ENCODE measurements at regions of chr11 and their contacts with region 1.

Region 1: GRCh38 chr11:129323896-129324512 is 51.6 kb upstream of the BARX2 start:
- DNase-seq: peak in 5 of 7 donors; percentile 25 to 47 (median 34)
- H3K4me3 ChIP-seq: peak overlapping the region in 1 of 4 donors; percentile 6
- H3K27ac ChIP-seq: peak overlapping the region in 1 of 5 donors; percentile 53
- H3K4me1 ChIP-seq: peaks cover 0 to 4% of the 10 kb centered on the region in 2 donors
- H3K27me3 ChIP-seq: no peaks in the 10 kb centered on the region
- CTCF ChIP-seq: no peak
- POLR2A ChIP-seq: no peak

Region 2: GRCh38 chr11:128884703-128885338 is 439.2 kb before region 1 on chr11:
- intact Hi-C with region 1: loop called in 1 of 2 experiments (anchors 10 kb)
- DNase-seq: peak; percentile 58 to 86 (median 76)
- H3K4me3 ChIP-seq: no peak overlapping the region
- H3K27ac ChIP-seq: no peak overlapping the region
- H3K4me1 ChIP-seq: peaks cover 0 to under 1% of the 10 kb centered on the region in 2 donors
- H3K27me3 ChIP-seq: no peaks in the 10 kb centered on the region
- CTCF ChIP-seq: peak; percentile 81 to 94 (median 92)
- POLR2A ChIP-seq: no peak

Region 3: GRCh38 chr11:129223701-129224149 is 100.3 kb before region 1 on chr11:
- intact Hi-C with region 1: loop called in 1 of 2 experiments (anchors 10 kb)
- DNase-seq: no peak
- H3K4me3 ChIP-seq: no peak overlapping the region
- H3K27ac ChIP-seq: peak overlapping the region in 1 of 5 donors; percentile 8
- H3K4me1 ChIP-seq: peaks cover 15 to 24% of the 10 kb centered on the region in 2 donors
- H3K27me3 ChIP-seq: no peaks in the 10 kb centered on the region
- CTCF ChIP-seq: no peak
- POLR2A ChIP-seq: no peak

Region 4: DNA sequence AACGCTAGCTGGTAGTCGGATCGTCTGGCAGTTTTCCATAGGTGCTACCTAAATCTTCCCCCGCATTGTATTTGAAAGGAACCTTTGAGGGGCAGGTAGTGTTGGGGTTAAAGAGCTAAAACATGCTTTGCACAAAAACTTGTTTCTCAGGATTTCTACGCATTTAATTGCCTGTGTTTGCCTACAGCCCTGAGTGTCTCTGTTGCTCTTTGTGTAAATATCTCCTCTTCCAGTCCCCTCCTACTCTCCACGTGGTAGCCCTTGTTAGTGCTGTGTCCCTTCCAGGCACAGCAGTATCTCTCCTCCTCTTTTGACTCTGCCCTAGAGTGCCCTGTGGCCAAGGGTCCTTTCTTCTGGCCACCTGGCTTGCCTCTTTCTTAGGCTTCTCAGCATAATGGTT is 133.3 kb after region 1 on chr11:
- intact Hi-C with region 1: no loop called
- DNase-seq: no peak
- H3K4me3 ChIP-seq: no peak overlapping the region
- H3K27ac ChIP-seq: no peak overlapping the region
- H3K4me1 ChIP-seq: no peaks in the 10 kb centered on the region
- H3K27me3 ChIP-seq: no peaks in the 10 kb centered on the region
- CTCF ChIP-seq: no peak
- POLR2A ChIP-seq: no peak

Region 5: DNA sequence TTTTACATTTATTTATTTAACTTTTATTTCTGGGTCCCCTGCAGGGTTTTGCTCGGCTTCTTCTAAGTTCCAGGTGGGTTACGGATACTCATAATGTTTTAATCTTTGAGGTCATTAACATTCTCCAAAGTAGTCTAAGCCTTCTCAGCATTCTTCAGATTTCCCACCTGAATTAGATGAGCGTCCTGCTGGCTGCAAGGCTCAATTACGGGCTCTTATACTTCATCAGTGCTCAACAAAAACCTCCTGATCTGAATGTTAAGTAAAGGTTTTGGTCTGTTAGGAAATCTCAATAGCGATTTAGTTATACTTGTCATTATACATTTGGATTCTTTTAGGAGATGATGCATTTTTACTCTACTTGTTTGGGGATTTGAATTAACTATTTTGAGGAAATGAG is 598.7 kb after region 1 on chr11:
- intact Hi-C with region 1: no loop called
- DNase-seq: no peak
- H3K4me3 ChIP-seq: no peak overlapping the region
- H3K27ac ChIP-seq: no peak overlapping the region
- H3K4me1 ChIP-seq: no peaks in the 10 kb centered on the region
- H3K27me3 ChIP-seq: no peaks in the 10 kb centered on the region
- CTCF ChIP-seq: no peak
- POLR2A ChIP-seq: no peak

Measured in adrenal gland (tissue), 19 donors.